Panc1 (cell line): ENCODE measurements at regions of chr6 and their contacts with region 1.

Region 1: GRCh38 chr6:129644567-129645015 is 65.4 kb downstream of the ARHGAP18 start:
- DNase-seq: no peak
- ATAC-seq: peak; percentile 70
- H3K4me3 ChIP-seq: no peak overlapping the region
- H3K27ac ChIP-seq: peak overlapping the region; percentile 82
- H3K4me1 ChIP-seq: peaks cover 30% of the 10 kb centered on the region
- H3K27me3 ChIP-seq: no peaks in the 10 kb centered on the region
- CTCF ChIP-seq: no peak

Region 2: DNA sequence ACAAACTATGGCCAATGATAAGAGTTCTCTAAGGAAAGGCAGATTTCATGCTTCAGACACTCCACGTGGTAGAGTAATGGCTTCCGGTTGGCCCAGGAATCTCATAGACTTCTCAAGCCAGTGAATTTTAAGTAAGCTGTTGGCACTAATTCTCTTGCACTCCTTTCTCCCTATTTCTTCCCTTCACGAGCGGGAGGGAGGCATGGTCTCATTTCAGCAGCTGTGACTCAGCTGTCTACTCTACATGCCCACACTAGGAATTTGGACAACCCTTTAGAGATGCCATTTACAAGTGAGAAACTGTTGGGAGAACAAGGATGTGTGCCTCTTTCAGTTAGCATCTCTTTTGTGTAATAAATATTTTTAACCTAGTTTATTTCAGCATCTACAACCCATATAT is 1231.9 kb before region 1 on chr6:
- CTCF ChIA-PET with region 1: no interaction called
- POLR2A ChIA-PET with region 1: no interaction called
- in situ Hi-C with region 1: no loop called
- intact Hi-C with region 1: no loop called
- DNase-seq: no peak
- ATAC-seq: no peak
- H3K4me3 ChIP-seq: no peak overlapping the region
- H3K27ac ChIP-seq: no peak overlapping the region
- H3K4me1 ChIP-seq: no peaks in the 10 kb centered on the region
- H3K27me3 ChIP-seq: no peaks in the 10 kb centered on the region
- CTCF ChIP-seq: no peak

Region 3: GRCh38 chr6:129340983-129341382 is 303.6 kb before region 1 on chr6:
- CTCF ChIA-PET with region 1: no interaction called
- POLR2A ChIA-PET with region 1: no interaction called
- in situ Hi-C with region 1: no loop called
- intact Hi-C with region 1: no loop called
- DNase-seq: no peak
- ATAC-seq: no peak
- H3K4me3 ChIP-seq: no peak overlapping the region
- H3K27ac ChIP-seq: no peak overlapping the region
- H3K4me1 ChIP-seq: no peaks in the 10 kb centered on the region; the same call in 1 of the 2 replicates
- H3K27me3 ChIP-seq: no peaks in the 10 kb centered on the region
- CTCF ChIP-seq: no peak

Region 4: DNA sequence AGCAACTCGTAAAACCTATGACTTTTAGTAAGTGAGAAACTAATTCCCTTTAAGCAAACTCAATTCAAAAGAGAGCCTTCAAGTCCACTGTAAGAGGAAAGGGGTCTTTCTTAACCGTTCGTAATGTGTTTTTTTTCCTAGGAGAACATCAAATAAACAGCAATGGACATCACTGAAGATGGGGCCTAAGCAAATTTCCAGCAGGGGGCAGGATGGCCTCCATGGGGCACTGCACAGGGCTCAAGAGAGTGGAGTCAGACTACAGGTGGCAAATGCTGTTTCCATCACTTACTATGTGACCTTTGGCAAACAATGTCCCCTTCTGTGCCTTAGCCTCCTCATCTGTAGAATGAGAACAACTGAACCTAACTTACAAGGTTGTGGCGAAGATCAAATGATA is 23.3 kb before region 1 on chr6:
- CTCF ChIA-PET with region 1: no interaction called
- POLR2A ChIA-PET with region 1: no interaction called
- in situ Hi-C with region 1: no loop called
- intact Hi-C with region 1: no loop called
- DNase-seq: no peak
- ATAC-seq: no peak
- H3K4me3 ChIP-seq: no peak overlapping the region
- H3K27ac ChIP-seq: no peak overlapping the region
- H3K4me1 ChIP-seq: no peaks in the 10 kb centered on the region
- H3K27me3 ChIP-seq: no peaks in the 10 kb centered on the region
- CTCF ChIP-seq: peak; percentile 44; the same call in 1 of the 2 replicates

Region 5: DNA sequence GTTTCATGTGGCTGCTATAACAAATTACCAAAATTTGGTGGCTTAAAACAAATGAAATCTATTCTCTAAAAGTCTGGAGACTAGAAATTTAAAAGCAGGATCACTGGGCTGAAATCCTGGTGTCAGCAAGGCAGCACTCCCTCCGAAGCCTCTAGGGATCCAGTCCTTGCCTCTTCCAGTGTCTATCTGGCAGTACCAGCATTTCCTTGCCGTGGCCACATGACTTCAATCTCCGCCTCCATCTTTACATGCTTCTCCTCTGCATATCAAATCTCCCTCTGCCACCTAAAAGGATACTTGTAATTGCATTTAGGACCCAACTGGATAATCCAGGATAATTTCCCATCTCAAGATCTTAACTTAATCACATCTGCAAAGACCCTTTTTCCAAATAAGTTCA is 35.2 kb after region 1 on chr6:
- CTCF ChIA-PET with region 1: no interaction called
- POLR2A ChIA-PET with region 1: no interaction called
- in situ Hi-C with region 1: no loop called
- intact Hi-C with region 1: loop called (anchors 2 kb)
- DNase-seq: no peak
- ATAC-seq: peak; percentile 72
- H3K4me3 ChIP-seq: peak overlapping the region; percentile 7 to 41; a peak in 3 of 4 replicates
- H3K27ac ChIP-seq: peak overlapping the region; percentile 51
- H3K4me1 ChIP-seq: peaks cover 41% of the 10 kb centered on the region
- H3K27me3 ChIP-seq: no peaks in the 10 kb centered on the region
- CTCF ChIP-seq: no peak

Region 6: GRCh38 chr6:129966125-129966524 is 321.5 kb after region 1 on chr6:
- CTCF ChIA-PET with region 1: no interaction called
- POLR2A ChIA-PET with region 1: no interaction called
- in situ Hi-C with region 1: no loop called
- intact Hi-C with region 1: no loop called
- DNase-seq: no peak
- ATAC-seq: no peak
- H3K4me3 ChIP-seq: no peak overlapping the region
- H3K27ac ChIP-seq: no peak overlapping the region
- H3K4me1 ChIP-seq: no peaks in the 10 kb centered on the region
- H3K27me3 ChIP-seq: no peaks in the 10 kb centered on the region
- CTCF ChIP-seq: no peak